Left ventricle myocardium superior (tissue), 1 donor: ENCODE measurements at regions of chr1 and their contacts with region 1.

Region 1: GRCh38 chr1:174726167-174726879 is 273.4 kb upstream of the CACYBP start:
- DNase-seq: no peak
- ATAC-seq: no peak

Region 2: GRCh38 chr1:174413632-174414031 is 312.7 kb before region 1 on chr1:
- intact Hi-C with region 1: loop called (anchors 10 kb)
- DNase-seq: no peak
- ATAC-seq: peak; percentile 22